ENCODE measurements at regions of chr3 and their contacts with region 1.

Region 1: DNA sequence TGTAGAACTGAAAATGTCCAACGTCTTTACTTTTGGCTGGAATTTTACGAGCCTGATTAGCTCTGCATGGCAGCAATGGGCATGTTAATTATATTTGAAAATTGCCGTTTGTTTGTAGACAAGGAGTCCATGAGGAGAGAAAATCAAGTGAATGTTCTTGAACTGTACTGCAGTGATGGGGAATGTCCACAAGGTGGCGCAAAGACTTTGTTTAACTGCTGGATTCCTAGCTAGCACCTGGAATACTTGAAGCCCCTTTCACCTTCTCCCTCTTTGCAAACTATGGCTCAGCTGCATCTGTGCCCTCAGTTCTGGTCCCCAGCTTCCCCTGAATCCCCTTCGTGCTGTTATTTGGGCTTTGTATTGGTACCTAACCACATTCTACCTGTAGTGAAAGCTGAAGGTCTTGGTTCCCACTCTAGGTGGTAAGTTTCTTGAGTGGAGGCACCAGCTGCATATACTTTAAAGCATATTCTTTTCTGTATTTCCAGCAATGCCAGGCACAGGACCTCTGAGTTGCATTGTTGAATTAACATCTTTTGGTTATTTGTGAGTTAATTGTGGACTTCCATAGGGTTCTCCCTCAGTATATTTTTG is 25.3 kb downstream of the EXOG start:
- DNase-seq: peak in 2 of 3 donors; percentile 35 to 42
- ATAC-seq: peak; percentile 77 to 88 (median 82)
- H3K4me3 ChIP-seq: no peak overlapping the region
- H3K27ac ChIP-seq: no peak overlapping the region
- H3K4me1 ChIP-seq: no peaks in the 10 kb centered on the region
- H3K27me3 ChIP-seq: no peaks in the 10 kb centered on the region
- CTCF ChIP-seq: peak; percentile 84 to 95 (median 92)
- POLR2A ChIP-seq: no peak

Region 2: GRCh38 chr3:38651154-38651789 is 129.8 kb after region 1 on chr3:
- intact Hi-C with region 1: loop called (anchors 5 to 10 kb)
- DNase-seq: peak; percentile 58 to 69 (median 68)
- ATAC-seq: peak; percentile 81 to 89 (median 86)
- H3K4me3 ChIP-seq: no peak overlapping the region
- H3K27ac ChIP-seq: no peak overlapping the region
- H3K4me1 ChIP-seq: peaks cover 0 to 7% (median 3%) of the 10 kb centered on the region in 4 donors
- H3K27me3 ChIP-seq: peaks cover 0 to 16% of the 10 kb centered on the region in 2 donors
- CTCF ChIP-seq: peak; percentile 78 to 93 (median 90)
- POLR2A ChIP-seq: no peak

Region 3: GRCh38 chr3:38843898-38844297 is 322.4 kb after region 1 on chr3:
- intact Hi-C with region 1: loop called in 1 of 2 experiments (anchors 5 kb)
- DNase-seq: no peak
- ATAC-seq: peak; percentile 55 to 72 (median 65)
- H3K4me3 ChIP-seq: no peak overlapping the region
- H3K27ac ChIP-seq: no peak overlapping the region
- H3K4me1 ChIP-seq: no peaks in the 10 kb centered on the region
- H3K27me3 ChIP-seq: no peaks in the 10 kb centered on the region
- CTCF ChIP-seq: peak; percentile 9 to 33 (median 29)
- POLR2A ChIP-seq: no peak

Measured in right lobe of liver (tissue), 6 donors.